ENCODE measurements at regions of chr17 and their contacts with region 1.

Region 1: GRCh38 chr17:57243171-57243948 is 13.0 kb upstream of the MSI2 start:
- DNase-seq: no peak
- H3K4me3 ChIP-seq: no peak overlapping the region
- H3K27me3 ChIP-seq: peaks cover 2% of the 10 kb centered on the region
- CTCF ChIP-seq: peak; percentile 100

Region 2: DNA sequence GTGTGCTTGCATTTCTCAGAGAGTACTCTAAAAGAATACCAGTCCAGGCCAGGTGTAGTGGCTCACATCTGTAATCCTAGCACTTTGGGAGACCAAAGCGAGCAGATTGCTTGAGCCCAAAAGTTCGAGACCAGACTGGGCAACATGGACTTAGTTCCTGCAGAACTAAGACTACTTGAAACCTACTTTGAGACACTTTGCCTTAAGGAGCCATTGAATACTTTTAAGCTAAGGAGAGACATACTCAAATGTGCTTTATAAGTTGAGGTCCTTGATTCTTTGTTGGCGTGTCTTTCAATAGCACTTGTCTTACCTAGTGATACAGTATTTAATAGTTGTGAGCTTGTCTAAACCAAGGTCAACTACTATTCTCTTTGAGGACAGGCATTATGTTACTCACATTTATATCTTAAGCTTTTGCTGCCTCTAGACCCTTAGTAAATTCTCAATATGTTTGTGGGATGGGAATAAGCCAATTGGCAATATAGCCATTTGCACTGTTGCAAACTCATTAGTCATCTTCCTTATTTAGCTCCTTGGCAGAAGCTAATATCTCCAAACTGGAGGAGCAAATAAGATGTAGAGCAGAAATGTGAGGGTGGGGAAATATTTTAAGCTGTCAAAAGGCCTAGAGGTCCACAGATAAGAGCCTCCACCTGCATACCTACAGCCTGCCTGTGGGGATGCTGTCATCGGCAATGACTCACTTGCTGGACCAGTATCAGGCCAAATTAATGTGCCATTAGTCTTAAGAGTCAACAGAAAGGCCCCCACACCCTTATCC is 249.2 kb before region 1 on chr17:
- CTCF ChIA-PET with region 1: no interaction called
- POLR2A ChIA-PET with region 1: no interaction called
- DNase-seq: no peak
- H3K4me3 ChIP-seq: no peak overlapping the region
- H3K27me3 ChIP-seq: no peaks in the 10 kb centered on the region
- CTCF ChIP-seq: no peak

Region 3: GRCh38 chr17:57226793-57227192 is 16.6 kb before region 1 on chr17:
- CTCF ChIA-PET with region 1: interaction called, 15 read pairs
- POLR2A ChIA-PET with region 1: no interaction called
- DNase-seq: no peak
- H3K4me3 ChIP-seq: no peak overlapping the region
- H3K27me3 ChIP-seq: peaks cover 6% of the 10 kb centered on the region; the same call in 1 of the 2 replicates
- CTCF ChIP-seq: no peak

Region 4: GRCh38 chr17:57406131-57406980 is 163.0 kb after region 1 on chr17:
- CTCF ChIA-PET with region 1: interaction called, 12 read pairs
- POLR2A ChIA-PET with region 1: no interaction called
- DNase-seq: peak; percentile 84
- H3K4me3 ChIP-seq: no peak overlapping the region
- H3K27me3 ChIP-seq: no peaks in the 10 kb centered on the region
- CTCF ChIP-seq: no peak

Region 5: GRCh38 chr17:57597531-57598453 is 354.4 kb after region 1 on chr17:
- CTCF ChIA-PET with region 1: interaction called, 28 read pairs
- POLR2A ChIA-PET with region 1: no interaction called
- DNase-seq: peak; percentile 8
- H3K4me3 ChIP-seq: no peak overlapping the region
- H3K27me3 ChIP-seq: no peaks in the 10 kb centered on the region
- CTCF ChIP-seq: peak; percentile 91

Region 6: GRCh38 chr17:57747221-57748017 is 504.1 kb after region 1 on chr17:
- CTCF ChIA-PET with region 1: interaction called, 45 read pairs
- POLR2A ChIA-PET with region 1: no interaction called
- DNase-seq: peak; percentile 9
- H3K4me3 ChIP-seq: no peak overlapping the region
- H3K27me3 ChIP-seq: peaks cover 11% of the 10 kb centered on the region
- CTCF ChIP-seq: peak; percentile 82

Measured in BJ (cell line).